K562 (cell line): ENCODE measurements at regions of chr17 and their contacts with region 1.

Region 1: GRCh38 chr17:48024937-48025906 is 12.4 kb downstream of the COPZ2 start:
- DNase-seq: peak; percentile 95 to 97 (median 96)
- ATAC-seq: peak; percentile 94
- H3K4me3 ChIP-seq: peak overlapping the region; percentile 41
- H3K27ac ChIP-seq: peak overlapping the region; percentile 8; the same call in 1 of the 3 replicates
- H3K4me1 ChIP-seq: peaks cover 23 to 39% of the 10 kb centered on the region in 2 experiments; a peak in 4 of 5 replicates
- H3K27me3 ChIP-seq: no peaks in the 10 kb centered on the region
- CTCF ChIP-seq: peak; percentile 83 to 96 (median 91)
- EP300 ChIP-seq: no peak
- POLR2A ChIP-seq: no peak
- RAD21 ChIP-seq: peak; percentile 84 to 92

Region 2: DNA sequence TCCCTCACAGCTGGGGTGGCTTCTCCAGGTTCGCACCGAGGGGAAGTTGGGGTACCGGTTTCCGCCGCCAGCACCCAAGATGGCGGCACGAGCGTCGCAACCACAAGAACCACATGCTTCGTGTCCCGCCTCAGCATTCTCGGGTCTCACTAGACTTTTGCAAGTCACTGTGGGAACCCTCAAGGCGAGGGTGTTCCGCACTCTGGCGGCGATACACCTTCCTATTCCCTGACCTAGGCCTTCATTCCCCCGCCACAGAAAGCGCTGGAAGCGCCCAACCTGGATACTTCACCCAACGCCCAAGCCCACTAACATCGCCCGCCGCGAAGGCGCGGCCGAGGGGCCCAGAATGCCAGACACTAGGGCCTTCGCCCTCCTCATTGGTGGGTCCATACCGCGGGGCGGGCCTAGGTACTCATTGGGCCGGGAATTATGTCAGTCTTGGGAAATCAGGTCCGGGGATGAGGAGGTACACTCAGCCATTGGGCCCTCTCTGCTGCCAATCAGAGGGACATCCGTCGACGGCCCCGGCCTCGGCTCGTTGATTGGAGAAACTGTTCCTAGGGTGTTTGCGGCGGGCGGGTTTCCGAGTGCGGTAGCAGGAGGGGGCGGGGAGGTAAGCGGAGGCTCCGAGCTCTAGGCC is 22.6 kb after region 1 on chr17 and contains the start of gene NFE2L1:
- CTCF ChIA-PET with region 1: interaction called, 3 read pairs
- POLR2A ChIA-PET with region 1: interaction called, 16 read pairs
- in situ Hi-C with region 1: no loop called
- intact Hi-C with region 1: loop called (anchors 2 kb)
- DNase-seq: peak; percentile 94 to 99 (median 97)
- ATAC-seq: peak; percentile 93
- H3K4me3 ChIP-seq: peak within 1 kb of the TSS; percentile 85
- H3K27ac ChIP-seq: peak within 1 kb of the TSS; percentile 97
- H3K4me1 ChIP-seq: peaks cover 34 to 42% of the 10 kb centered on the region in 2 experiments
- H3K27me3 ChIP-seq: no peaks in the 10 kb centered on the region
- CTCF ChIP-seq: peak in 1 of 3 experiments; percentile 5; a peak in 1 of 6 replicates
- EP300 ChIP-seq: no peak
- POLR2A ChIP-seq: peak; percentile 95
- RAD21 ChIP-seq: no peak
- polyA plus RNA-seq, gene NFE2L1: 2.0 to 2.8 TPM

Region 3: DNA sequence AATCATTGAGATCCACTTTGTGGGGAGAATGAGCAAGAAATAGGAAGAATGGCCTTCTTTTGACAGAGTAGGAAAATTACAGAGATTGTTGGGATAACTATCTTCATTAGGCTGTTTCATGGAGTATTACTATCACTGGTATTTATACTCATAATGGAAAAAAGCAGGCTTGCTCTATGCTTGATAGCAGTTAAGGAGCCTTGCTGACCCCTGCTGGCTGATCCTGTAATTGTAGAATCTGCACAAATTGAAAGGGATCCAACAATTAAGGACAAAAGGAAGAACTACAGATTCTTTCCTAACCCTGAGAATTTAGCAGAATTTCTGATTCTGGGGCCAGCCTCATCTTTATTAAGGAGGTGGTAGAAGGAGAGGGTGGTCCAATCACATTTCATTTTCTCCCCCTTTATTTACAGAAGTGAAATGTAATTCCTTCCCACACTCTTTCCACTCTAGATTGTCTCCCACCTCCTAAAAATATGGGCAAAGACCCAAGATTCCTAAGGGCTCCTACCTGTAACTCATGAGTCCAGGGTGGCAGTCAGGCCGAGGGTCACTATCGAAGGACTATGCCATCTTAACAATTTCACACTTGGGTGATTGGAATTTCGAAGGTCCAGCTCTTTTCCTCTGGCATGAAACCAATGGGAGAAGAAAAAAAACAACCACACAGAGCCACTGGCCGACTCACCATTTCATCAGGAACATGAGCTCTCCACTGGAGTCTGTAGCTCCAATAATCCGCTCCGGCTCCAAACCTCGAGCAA is 49.3 kb after region 1 on chr17:
- CTCF ChIA-PET with region 1: interaction called, 54 read pairs
- POLR2A ChIA-PET with region 1: interaction called, 8 read pairs
- in situ Hi-C with region 1: loop called (anchors 5 kb)
- intact Hi-C with region 1: loop called (anchors 1 kb)
- DNase-seq: peak; percentile 53 to 79 (median 61)
- ATAC-seq: peak; percentile 92
- H3K4me3 ChIP-seq: no peak overlapping the region
- H3K27ac ChIP-seq: no peak overlapping the region
- H3K4me1 ChIP-seq: no peaks in the 10 kb centered on the region
- H3K27me3 ChIP-seq: no peaks in the 10 kb centered on the region
- CTCF ChIP-seq: peak; percentile 75 to 95 (median 80)
- EP300 ChIP-seq: no peak
- POLR2A ChIP-seq: no peak
- RAD21 ChIP-seq: peak; percentile 90 to 97

Region 4: GRCh38 chr17:48139944-48140343 is 114.7 kb after region 1 on chr17:
- CTCF ChIA-PET with region 1: no interaction called
- POLR2A ChIA-PET with region 1: interaction called, 3 read pairs
- in situ Hi-C with region 1: loop called (anchors 5 kb)
- intact Hi-C with region 1: no loop called
- DNase-seq: no peak
- ATAC-seq: no peak; the same call in 2 of the 3 replicates
- H3K4me3 ChIP-seq: no peak overlapping the region
- H3K27ac ChIP-seq: no peak overlapping the region
- H3K4me1 ChIP-seq: no peaks in the 10 kb centered on the region; a peak in 1 of 5 replicates
- H3K27me3 ChIP-seq: peaks cover 25 to 32% of the 10 kb centered on the region in 2 experiments; a peak in 4 of 5 replicates
- CTCF ChIP-seq: no peak
- EP300 ChIP-seq: no peak
- POLR2A ChIP-seq: no peak
- RAD21 ChIP-seq: no peak

Region 5: GRCh38 chr17:48618256-48618897 is 593.2 kb after region 1 on chr17:
- CTCF ChIA-PET with region 1: interaction called, 10 read pairs
- POLR2A ChIA-PET with region 1: no interaction called
- in situ Hi-C with region 1: loop called (anchors 10 kb)
- intact Hi-C with region 1: no loop called
- DNase-seq: peak; percentile 86 to 92 (median 88)
- ATAC-seq: peak; percentile 67
- H3K4me3 ChIP-seq: peak overlapping the region; percentile 39
- H3K27ac ChIP-seq: no peak overlapping the region; the same call in 2 of the 3 replicates
- H3K4me1 ChIP-seq: peaks cover 44 to 47% of the 10 kb centered on the region in 2 experiments; a peak in 4 of 5 replicates
- H3K27me3 ChIP-seq: no peaks in the 10 kb centered on the region
- CTCF ChIP-seq: peak; percentile 96 to 97 (median 96)
- EP300 ChIP-seq: no peak
- POLR2A ChIP-seq: peak; percentile 43; the same call in 1 of the 2 replicates
- RAD21 ChIP-seq: peak; percentile 92 to 95